PC-9 (cell line): ENCODE measurements at regions of chr17 and their contacts with region 1.

Region 1: DNA sequence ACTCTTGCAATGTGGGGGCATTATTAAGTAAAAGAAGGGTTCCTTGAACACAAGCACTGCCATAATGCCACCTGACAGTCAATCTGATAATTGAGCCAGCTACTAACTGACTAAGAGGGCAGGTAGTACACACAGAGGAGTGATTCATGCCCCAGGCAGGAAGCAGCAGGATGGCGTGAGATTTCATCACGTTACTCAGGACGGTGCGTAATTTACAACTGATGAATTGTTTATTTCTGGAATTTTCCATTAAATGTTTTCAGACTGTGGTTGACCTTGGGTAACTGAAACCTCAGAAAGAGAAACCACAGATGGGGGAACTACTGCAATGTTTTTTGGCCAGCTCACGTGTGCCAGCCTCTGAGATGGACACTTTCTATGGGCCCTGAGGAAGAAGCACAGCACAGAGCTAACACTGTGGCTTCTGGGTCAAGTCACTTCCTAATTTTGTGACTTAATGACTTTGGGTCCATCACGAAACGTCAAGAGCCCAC is 46.7 kb downstream of the C17orf67 start:
- DNase-seq: peak; percentile 71 to 98
- H3K4me3 ChIP-seq: no peak overlapping the region
- H3K27ac ChIP-seq: peak overlapping the region; percentile 85
- H3K4me1 ChIP-seq: peaks cover 40% of the 10 kb centered on the region
- H3K27me3 ChIP-seq: no peaks in the 10 kb centered on the region
- CTCF ChIP-seq: no peak

Region 2: GRCh38 chr17:55750750-55751657 is 1036.0 kb before region 1 on chr17 and contains the start of gene PCTP:
- CTCF ChIA-PET with region 1: no interaction called
- POLR2A ChIA-PET with region 1: interaction called, 11 read pairs
- intact Hi-C with region 1: no loop called
- DNase-seq: peak; percentile 86 to 96
- H3K4me3 ChIP-seq: peak within 1 kb of the TSS; percentile 74
- H3K27ac ChIP-seq: peak within 1 kb of the TSS; percentile 44
- H3K4me1 ChIP-seq: peaks cover 20% of the 10 kb centered on the region
- H3K27me3 ChIP-seq: no peaks in the 10 kb centered on the region
- CTCF ChIP-seq: peak; percentile 55
- total RNA-seq, gene PCTP: 16.0 and 17.3 TPM in 2 replicates

Region 3: GRCh38 chr17:56661916-56662315 is 125.1 kb before region 1 on chr17:
- CTCF ChIA-PET with region 1: no interaction called
- POLR2A ChIA-PET with region 1: no interaction called
- intact Hi-C with region 1: no loop called
- DNase-seq: no peak
- H3K4me3 ChIP-seq: no peak overlapping the region
- H3K27ac ChIP-seq: no peak overlapping the region
- H3K4me1 ChIP-seq: peaks cover 25% of the 10 kb centered on the region
- H3K27me3 ChIP-seq: no peaks in the 10 kb centered on the region
- CTCF ChIP-seq: no peak

Region 4: GRCh38 chr17:56808503-56808902 is 21.5 kb after region 1 on chr17:
- CTCF ChIA-PET with region 1: no interaction called
- POLR2A ChIA-PET with region 1: no interaction called
- intact Hi-C with region 1: no loop called
- DNase-seq: no peak
- H3K4me3 ChIP-seq: no peak overlapping the region
- H3K27ac ChIP-seq: no peak overlapping the region
- H3K4me1 ChIP-seq: no peaks in the 10 kb centered on the region
- H3K27me3 ChIP-seq: no peaks in the 10 kb centered on the region
- CTCF ChIP-seq: no peak

Region 5: GRCh38 chr17:56913864-56914640 is 127.0 kb after region 1 on chr17 and contains the start of gene TRIM25:
- CTCF ChIA-PET with region 1: no interaction called
- POLR2A ChIA-PET with region 1: no interaction called
- intact Hi-C with region 1: loop called (anchors 5 kb)
- DNase-seq: peak; percentile 75 to 85
- H3K4me3 ChIP-seq: peak within 1 kb of the TSS; percentile 83
- H3K27ac ChIP-seq: peak within 1 kb of the TSS; percentile 99
- H3K4me1 ChIP-seq: peaks cover 54% of the 10 kb centered on the region
- H3K27me3 ChIP-seq: no peaks in the 10 kb centered on the region
- CTCF ChIP-seq: no peak
- total RNA-seq, gene TRIM25: 63.8 and 92.8 TPM in 2 replicates